ENCODE measurements at regions of chr1 and their contacts with region 1.

Region 1: GRCh38 chr1:170321113-170321512 is 175.4 kb downstream of the NTMT2 start:
- DNase-seq: no peak
- ATAC-seq: no peak
- H3K4me3 ChIP-seq: no peak overlapping the region
- H3K27ac ChIP-seq: no peak overlapping the region
- H3K4me1 ChIP-seq: no peaks in the 10 kb centered on the region
- H3K27me3 ChIP-seq: no peaks in the 10 kb centered on the region
- CTCF ChIP-seq: no peak
- EP300 ChIP-seq: no peak
- POLR2A ChIP-seq: no peak
- RAD21 ChIP-seq: no peak

Region 2: DNA sequence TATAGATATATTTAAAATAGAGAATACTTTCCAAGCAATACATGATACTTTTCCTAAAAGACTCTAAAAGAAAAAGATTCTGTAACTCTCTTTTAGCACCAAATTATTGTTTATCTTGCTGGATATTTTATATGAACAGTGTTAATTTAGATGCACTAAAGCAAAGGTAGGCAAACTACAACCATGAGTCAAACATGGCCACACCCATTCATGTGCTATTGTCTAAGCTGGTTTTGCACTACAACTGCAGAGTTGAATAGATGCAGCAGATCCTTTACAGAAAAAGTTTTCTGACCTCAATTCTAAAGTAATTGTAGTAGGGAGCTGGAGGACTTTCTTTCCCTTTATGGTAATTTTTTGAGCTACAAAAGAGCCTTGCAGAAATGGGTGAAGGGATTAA is 933.7 kb before region 1 on chr1:
- CTCF ChIA-PET with region 1: no interaction called
- POLR2A ChIA-PET with region 1: no interaction called
- RAD21 ChIA-PET with region 1: no interaction called
- SMC1A ChIA-PET with region 1: no interaction called
- in situ Hi-C with region 1: no loop called
- intact Hi-C with region 1: no loop called
- DNase-seq: no peak
- ATAC-seq: no peak
- H3K4me3 ChIP-seq: no peak overlapping the region
- H3K27ac ChIP-seq: no peak overlapping the region
- H3K4me1 ChIP-seq: peaks cover 6% of the 10 kb centered on the region; the same call in 1 of the 2 replicates
- H3K27me3 ChIP-seq: no peaks in the 10 kb centered on the region
- CTCF ChIP-seq: no peak
- EP300 ChIP-seq: no peak
- POLR2A ChIP-seq: no peak
- RAD21 ChIP-seq: no peak

Region 3: GRCh38 chr1:170175056-170175455 is 146.1 kb before region 1 on chr1:
- CTCF ChIA-PET with region 1: no interaction called
- POLR2A ChIA-PET with region 1: no interaction called
- RAD21 ChIA-PET with region 1: no interaction called
- SMC1A ChIA-PET with region 1: no interaction called
- in situ Hi-C with region 1: no loop called
- intact Hi-C with region 1: no loop called
- DNase-seq: no peak
- ATAC-seq: no peak
- H3K4me3 ChIP-seq: no peak overlapping the region
- H3K27ac ChIP-seq: no peak overlapping the region
- H3K4me1 ChIP-seq: no peaks in the 10 kb centered on the region
- H3K27me3 ChIP-seq: no peaks in the 10 kb centered on the region
- CTCF ChIP-seq: no peak
- EP300 ChIP-seq: no peak
- POLR2A ChIP-seq: no peak
- RAD21 ChIP-seq: no peak

Region 4: GRCh38 chr1:170310951-170311350 is 10.2 kb before region 1 on chr1:
- CTCF ChIA-PET with region 1: interaction called, 4 read pairs
- POLR2A ChIA-PET with region 1: no interaction called
- RAD21 ChIA-PET with region 1: interaction called, 3 read pairs
- SMC1A ChIA-PET with region 1: interaction called, 12 read pairs
- in situ Hi-C with region 1: no loop called
- intact Hi-C with region 1: no loop called
- DNase-seq: no peak
- ATAC-seq: no peak
- H3K4me3 ChIP-seq: no peak overlapping the region
- H3K27ac ChIP-seq: no peak overlapping the region
- H3K4me1 ChIP-seq: no peaks in the 10 kb centered on the region
- H3K27me3 ChIP-seq: no peaks in the 10 kb centered on the region
- CTCF ChIP-seq: no peak
- EP300 ChIP-seq: no peak
- POLR2A ChIP-seq: no peak
- RAD21 ChIP-seq: no peak

Region 5: GRCh38 chr1:170332801-170333200 is 11.7 kb after region 1 on chr1:
- CTCF ChIA-PET with region 1: interaction called, 7 read pairs
- POLR2A ChIA-PET with region 1: no interaction called
- RAD21 ChIA-PET with region 1: interaction called, 3 read pairs
- SMC1A ChIA-PET with region 1: interaction called, 13 read pairs
- in situ Hi-C with region 1: no loop called
- intact Hi-C with region 1: no loop called
- DNase-seq: no peak
- ATAC-seq: no peak
- H3K4me3 ChIP-seq: no peak overlapping the region
- H3K27ac ChIP-seq: no peak overlapping the region
- H3K4me1 ChIP-seq: no peaks in the 10 kb centered on the region
- H3K27me3 ChIP-seq: no peaks in the 10 kb centered on the region
- CTCF ChIP-seq: no peak
- EP300 ChIP-seq: no peak
- POLR2A ChIP-seq: no peak
- RAD21 ChIP-seq: no peak

Region 6: GRCh38 chr1:170360601-170361000 is 39.5 kb after region 1 on chr1:
- CTCF ChIA-PET with region 1: no interaction called
- POLR2A ChIA-PET with region 1: no interaction called
- RAD21 ChIA-PET with region 1: no interaction called
- SMC1A ChIA-PET with region 1: no interaction called
- in situ Hi-C with region 1: no loop called
- intact Hi-C with region 1: no loop called
- DNase-seq: no peak
- ATAC-seq: no peak
- H3K4me3 ChIP-seq: no peak overlapping the region
- H3K27ac ChIP-seq: no peak overlapping the region
- H3K4me1 ChIP-seq: no peaks in the 10 kb centered on the region
- H3K27me3 ChIP-seq: no peaks in the 10 kb centered on the region
- CTCF ChIP-seq: no peak
- EP300 ChIP-seq: no peak
- POLR2A ChIP-seq: no peak
- RAD21 ChIP-seq: no peak

Measured in GM12878 (cell line).